Sigmoid colon (tissue), 7 donors: ENCODE measurements at regions of chr3 and their contacts with region 1.

Region 1: GRCh38 chr3:25844891-25845290 is 55.0 kb downstream of the OXSM start:
- DNase-seq: no peak
- H3K4me3 ChIP-seq: no peak overlapping the region
- H3K27ac ChIP-seq: no peak overlapping the region
- H3K4me1 ChIP-seq: peaks cover 0 to 24% (median 0%) of the 10 kb centered on the region in 4 donors
- H3K27me3 ChIP-seq: no peaks in the 10 kb centered on the region
- CTCF ChIP-seq: no peak
- EP300 ChIP-seq: no peak
- POLR2A ChIP-seq: no peak

Region 2: GRCh38 chr3:26712211-26713026 is 867.5 kb after region 1 on chr3:
- intact Hi-C with region 1: loop called (anchors 2 kb)
- DNase-seq: no peak
- H3K4me3 ChIP-seq: no peak overlapping the region
- H3K27ac ChIP-seq: no peak overlapping the region
- H3K4me1 ChIP-seq: peaks cover 0 to 3% (median 0%) of the 10 kb centered on the region in 4 donors
- H3K27me3 ChIP-seq: no peaks in the 10 kb centered on the region
- CTCF ChIP-seq: peak; percentile 13 to 72 (median 51)
- EP300 ChIP-seq: no peak
- POLR2A ChIP-seq: no peak